Panc1 (cell line): ENCODE measurements at regions of chr22 and their contacts with region 1.

Region 1: DNA sequence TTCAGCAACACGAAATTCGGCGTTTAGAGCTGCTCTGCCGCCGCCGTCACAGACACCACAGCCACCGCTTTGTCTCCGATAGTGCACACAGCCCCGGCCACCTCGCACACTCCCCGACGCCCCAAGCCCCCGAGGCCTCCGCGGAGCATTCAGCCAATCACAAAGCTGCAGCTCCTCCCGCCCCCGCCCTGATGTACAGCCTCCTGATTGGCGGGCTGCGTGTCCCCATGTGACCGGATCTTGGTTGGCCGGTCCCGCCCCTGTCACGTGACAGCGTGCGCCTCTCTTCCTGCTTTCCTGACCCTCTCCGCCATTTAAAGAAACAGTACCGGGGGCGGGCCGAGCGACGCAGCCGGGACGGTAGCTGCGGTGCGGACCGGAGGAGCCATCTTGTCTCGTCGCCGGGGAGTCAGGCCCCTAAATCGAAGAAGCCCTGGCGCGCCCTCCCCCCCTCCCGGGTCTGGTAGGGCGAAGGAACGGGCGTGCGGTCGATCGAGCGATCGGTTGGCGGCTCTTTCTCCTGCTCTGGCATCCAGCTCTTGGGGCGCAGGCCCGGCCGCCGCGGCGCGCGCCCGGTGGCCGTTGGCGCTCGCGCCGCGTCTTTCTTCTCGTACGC is at the start of gene TUG1:
- DNase-seq: peak; percentile 71
- ATAC-seq: peak; percentile 96
- H3K4me3 ChIP-seq: peak within 1 kb of the TSS; percentile 68 to 92
- H3K27ac ChIP-seq: peak within 1 kb of the TSS; percentile 91
- H3K4me1 ChIP-seq: peaks cover 14% of the 10 kb centered on the region; the same call in 1 of the 2 replicates
- H3K27me3 ChIP-seq: no peaks in the 10 kb centered on the region
- CTCF ChIP-seq: no peak
- total RNA-seq, gene TUG1: 69.8 TPM

Region 2: DNA sequence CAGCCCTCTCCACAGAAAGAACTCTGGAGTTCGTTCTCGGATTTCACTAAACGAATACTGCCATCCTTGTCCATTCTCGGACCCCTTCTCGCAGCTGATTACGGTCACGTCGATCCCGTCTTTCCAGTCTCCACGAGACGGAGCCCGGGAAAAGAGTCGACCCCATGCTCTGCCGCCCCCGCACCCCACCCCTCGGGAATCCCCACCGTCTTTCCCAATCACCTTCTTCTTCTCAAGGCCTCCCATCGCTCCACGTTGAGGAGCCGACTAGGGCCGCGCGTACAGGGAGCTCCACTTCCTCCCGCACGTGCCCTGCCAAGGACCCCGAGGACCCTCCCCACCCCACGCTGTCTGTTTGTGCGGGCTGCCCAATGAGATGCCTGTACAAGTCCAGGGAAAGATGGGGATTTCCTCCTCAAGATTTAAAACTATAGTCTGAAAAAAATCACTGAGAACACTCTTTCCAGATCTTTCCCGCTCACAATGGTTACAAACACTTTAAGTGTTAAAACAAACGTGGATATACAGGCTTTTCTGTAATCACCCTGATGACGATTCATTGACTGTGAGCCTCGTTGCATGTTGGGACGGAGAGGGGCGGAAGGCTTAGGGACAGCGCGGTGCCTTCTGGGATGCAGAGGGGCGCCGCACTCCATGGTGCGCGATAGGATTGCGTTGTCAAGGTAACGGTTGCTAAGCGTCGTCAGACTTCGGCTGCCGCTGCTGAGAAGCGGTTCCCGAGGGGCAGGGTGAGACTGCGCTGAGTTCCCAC is 377.3 kb before region 1 on chr22 and contains the start of gene PES1:
- CTCF ChIA-PET with region 1: no interaction called
- POLR2A ChIA-PET with region 1: no interaction called
- in situ Hi-C with region 1: no loop called
- intact Hi-C with region 1: no loop called
- DNase-seq: peak; percentile 93
- ATAC-seq: peak; percentile 100
- H3K4me3 ChIP-seq: peak within 1 kb of the TSS; percentile 97 to 98
- H3K27ac ChIP-seq: peak within 1 kb of the TSS; percentile 96
- H3K4me1 ChIP-seq: peaks cover 11% of the 10 kb centered on the region
- H3K27me3 ChIP-seq: no peaks in the 10 kb centered on the region
- CTCF ChIP-seq: no peak
- total RNA-seq, gene PES1: 111 TPM

Region 3: GRCh38 chr22:30979932-30980331 is 10.9 kb after region 1 on chr22:
- CTCF ChIA-PET with region 1: no interaction called
- POLR2A ChIA-PET with region 1: interaction called, 11 read pairs
- in situ Hi-C with region 1: no loop called
- intact Hi-C with region 1: no loop called
- DNase-seq: no peak
- ATAC-seq: no peak
- H3K4me3 ChIP-seq: no peak overlapping the region
- H3K27ac ChIP-seq: no peak overlapping the region
- H3K4me1 ChIP-seq: no peaks in the 10 kb centered on the region
- H3K27me3 ChIP-seq: no peaks in the 10 kb centered on the region
- CTCF ChIP-seq: no peak

Region 4: GRCh38 chr22:31223786-31224191 is 254.8 kb after region 1 on chr22:
- CTCF ChIA-PET with region 1: no interaction called
- POLR2A ChIA-PET with region 1: no interaction called
- in situ Hi-C with region 1: no loop called
- intact Hi-C with region 1: no loop called
- DNase-seq: no peak
- ATAC-seq: no peak
- H3K4me3 ChIP-seq: no peak overlapping the region
- H3K27ac ChIP-seq: no peak overlapping the region
- H3K4me1 ChIP-seq: peaks cover 9% of the 10 kb centered on the region
- H3K27me3 ChIP-seq: no peaks in the 10 kb centered on the region
- CTCF ChIP-seq: no peak